ENCODE measurements at regions of chr7 and their contacts with region 1.

Region 1: DNA sequence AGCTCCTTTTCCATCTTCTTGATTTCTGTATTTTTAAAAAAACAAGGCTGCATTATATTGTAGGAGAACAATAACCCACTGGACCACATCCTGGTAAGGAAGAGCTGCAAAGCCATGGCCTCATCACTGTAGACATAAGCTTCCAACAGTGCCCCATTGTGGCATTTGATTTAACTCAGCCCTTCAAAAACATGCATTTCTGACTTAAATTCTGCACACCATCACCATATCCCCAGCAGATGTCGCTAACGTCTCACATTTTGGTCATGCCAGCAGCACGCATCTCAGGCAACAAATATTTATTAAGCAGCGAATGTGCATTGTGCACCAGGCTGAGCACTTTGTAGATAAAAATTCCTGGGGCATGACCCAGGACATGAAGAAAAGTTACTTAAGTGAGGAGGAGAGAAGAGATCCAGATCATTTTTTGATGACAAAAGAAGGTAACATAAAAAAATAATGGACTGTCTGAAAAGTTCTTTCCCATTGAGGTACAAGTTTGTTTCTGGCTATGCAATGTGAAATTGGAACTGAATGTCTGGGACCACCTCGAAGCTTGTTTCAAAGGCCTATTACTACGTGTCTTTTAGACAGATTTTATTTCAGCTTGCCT is 164.6 kb upstream of the CDCA7L start:
- DNase-seq: peak; percentile 55
- ATAC-seq: peak; percentile 95
- H3K4me3 ChIP-seq: no peak overlapping the region
- H3K27ac ChIP-seq: no peak overlapping the region
- H3K4me1 ChIP-seq: no peaks in the 10 kb centered on the region
- H3K27me3 ChIP-seq: peaks cover 0 to 2% of the 10 kb centered on the region in 2 experiments; a peak in 1 of 4 replicates
- CTCF ChIP-seq: peak; percentile 76 to 97 (median 90); a peak in 5 of 6 replicates
- EP300 ChIP-seq: no peak
- POLR2A ChIP-seq: no peak
- RAD21 ChIP-seq: peak; percentile 100

Region 2: DNA sequence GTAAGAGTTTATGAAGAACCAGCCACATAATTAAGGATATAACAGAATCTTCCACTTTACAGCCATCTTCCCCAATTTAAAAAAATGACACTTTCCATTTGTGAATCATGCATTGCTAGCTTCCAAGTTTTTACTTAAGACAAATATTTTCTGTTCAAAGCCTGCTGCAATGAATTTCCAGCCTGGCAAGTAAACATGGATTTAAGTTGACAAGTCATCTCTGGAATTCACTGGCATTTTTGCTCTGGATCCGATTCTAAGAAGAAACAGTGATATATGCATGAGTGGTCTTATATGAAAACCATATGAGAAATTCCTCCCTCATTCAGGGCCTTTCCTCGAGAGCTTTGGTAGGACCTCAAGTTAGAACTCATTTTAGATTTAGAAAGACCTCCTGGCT is 48.6 kb before region 1 on chr7:
- CTCF ChIA-PET with region 1: no interaction called
- POLR2A ChIA-PET with region 1: no interaction called
- RAD21 ChIA-PET with region 1: no interaction called
- SMC1A ChIA-PET with region 1: no interaction called
- in situ Hi-C with region 1: no loop called
- intact Hi-C with region 1: no loop called
- DNase-seq: no peak
- ATAC-seq: no peak
- H3K4me3 ChIP-seq: no peak overlapping the region
- H3K27ac ChIP-seq: no peak overlapping the region
- H3K4me1 ChIP-seq: no peaks in the 10 kb centered on the region
- H3K27me3 ChIP-seq: no peaks in the 10 kb centered on the region; a peak in 1 of 4 replicates
- CTCF ChIP-seq: no peak
- EP300 ChIP-seq: no peak
- POLR2A ChIP-seq: no peak
- RAD21 ChIP-seq: no peak

Region 3: DNA sequence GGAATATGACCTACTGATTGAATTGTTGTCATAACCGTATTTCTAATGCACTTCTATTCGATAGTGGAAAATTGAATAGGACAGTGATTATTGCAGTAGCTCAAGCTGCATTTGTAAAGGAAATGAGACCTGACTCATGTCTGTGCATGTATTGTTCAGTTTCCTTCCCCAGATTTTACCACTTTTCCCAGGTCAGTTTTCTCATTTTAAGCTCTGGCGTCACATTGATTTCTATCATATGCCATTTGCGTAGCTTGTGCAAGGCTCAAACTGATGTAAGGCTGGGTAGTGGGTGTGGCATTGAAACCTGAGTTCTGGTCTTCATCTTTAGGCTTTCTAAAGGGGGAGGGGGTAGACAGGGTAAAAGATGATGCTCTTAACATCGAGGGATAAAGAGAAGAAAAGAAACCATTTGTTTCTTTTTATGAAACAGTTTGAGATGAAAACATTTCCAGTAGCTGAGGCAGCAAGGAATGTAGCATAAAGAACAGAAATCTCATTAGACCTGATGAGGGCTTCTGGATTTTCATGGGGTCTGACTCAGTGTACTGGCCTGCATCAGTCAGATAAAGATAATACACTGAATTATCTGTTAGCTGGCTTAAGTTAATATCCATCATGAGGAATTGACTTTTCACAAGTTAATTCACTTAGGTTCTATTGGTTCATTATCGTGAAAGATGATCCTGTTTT is 17.6 kb after region 1 on chr7:
- CTCF ChIA-PET with region 1: interaction called, 17 read pairs
- POLR2A ChIA-PET with region 1: no interaction called
- RAD21 ChIA-PET with region 1: interaction called, 3 read pairs
- SMC1A ChIA-PET with region 1: interaction called, 3 read pairs
- in situ Hi-C with region 1: no loop called
- intact Hi-C with region 1: no loop called
- DNase-seq: no peak
- ATAC-seq: no peak
- H3K4me3 ChIP-seq: no peak overlapping the region
- H3K27ac ChIP-seq: no peak overlapping the region
- H3K4me1 ChIP-seq: no peaks in the 10 kb centered on the region
- H3K27me3 ChIP-seq: no peaks in the 10 kb centered on the region
- CTCF ChIP-seq: no peak
- EP300 ChIP-seq: no peak
- POLR2A ChIP-seq: no peak
- RAD21 ChIP-seq: no peak

Region 4: DNA sequence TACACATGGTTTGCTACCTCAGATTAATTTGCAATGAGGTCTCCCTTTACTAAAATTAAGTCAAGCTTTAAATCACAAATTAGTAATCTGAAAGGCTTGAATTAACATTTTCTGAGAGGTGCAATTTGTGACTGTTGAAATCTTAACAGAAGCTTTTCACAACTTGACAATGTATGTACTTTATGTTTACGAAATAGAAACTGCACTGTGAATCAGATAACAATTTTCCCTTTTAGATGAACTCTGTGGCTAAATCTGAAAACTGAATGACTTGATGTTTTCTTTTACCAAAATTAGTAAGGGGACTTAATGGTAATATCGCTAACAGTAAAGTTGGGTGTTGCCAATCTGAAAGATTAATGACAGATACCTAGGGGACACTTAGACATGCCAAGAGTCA is 49.0 kb after region 1 on chr7:
- CTCF ChIA-PET with region 1: interaction called, 11 read pairs
- POLR2A ChIA-PET with region 1: no interaction called
- RAD21 ChIA-PET with region 1: no interaction called
- SMC1A ChIA-PET with region 1: no interaction called
- in situ Hi-C with region 1: no loop called
- intact Hi-C with region 1: no loop called
- DNase-seq: no peak
- ATAC-seq: no peak
- H3K4me3 ChIP-seq: no peak overlapping the region
- H3K27ac ChIP-seq: no peak overlapping the region
- H3K4me1 ChIP-seq: no peaks in the 10 kb centered on the region
- H3K27me3 ChIP-seq: no peaks in the 10 kb centered on the region
- CTCF ChIP-seq: no peak
- EP300 ChIP-seq: no peak
- POLR2A ChIP-seq: no peak
- RAD21 ChIP-seq: no peak

Region 5: GRCh38 chr7:22452142-22452959 is 342.0 kb after region 1 on chr7:
- CTCF ChIA-PET with region 1: interaction called, 45 read pairs
- POLR2A ChIA-PET with region 1: no interaction called
- RAD21 ChIA-PET with region 1: interaction called, 17 read pairs
- SMC1A ChIA-PET with region 1: interaction called, 22 read pairs
- in situ Hi-C with region 1: no loop called
- intact Hi-C with region 1: loop called (anchors 1 kb)
- DNase-seq: no peak
- ATAC-seq: peak; percentile 65
- H3K4me3 ChIP-seq: no peak overlapping the region; the same call in 1 of the 2 replicates
- H3K27ac ChIP-seq: no peak overlapping the region
- H3K4me1 ChIP-seq: peaks cover 7% of the 10 kb centered on the region
- H3K27me3 ChIP-seq: no peaks in the 10 kb centered on the region; a peak in 1 of 4 replicates
- CTCF ChIP-seq: peak; percentile 53 to 85 (median 81)
- EP300 ChIP-seq: no peak
- POLR2A ChIP-seq: no peak
- RAD21 ChIP-seq: peak; percentile 70

Region 6: DNA sequence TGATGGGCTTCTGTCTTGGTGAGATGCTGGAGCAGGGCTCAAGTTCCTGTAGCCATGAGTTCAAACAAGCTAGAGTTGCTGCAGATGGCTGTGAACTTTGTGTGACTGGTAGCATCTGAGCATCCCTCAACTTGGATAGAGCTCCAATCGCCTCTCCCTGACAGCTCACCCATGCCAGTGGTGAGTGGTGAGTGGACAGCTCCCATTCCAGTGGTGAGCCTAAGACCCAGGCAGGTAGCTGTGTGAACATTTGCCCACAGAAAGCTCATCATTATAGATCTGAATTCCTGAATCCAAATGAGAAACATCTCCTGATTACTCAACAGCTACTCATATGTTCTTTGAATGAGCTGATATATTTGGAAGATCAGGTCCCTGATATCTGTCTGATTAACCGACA is 364.3 kb after region 1 on chr7:
- CTCF ChIA-PET with region 1: interaction called, 74 read pairs
- POLR2A ChIA-PET with region 1: no interaction called
- RAD21 ChIA-PET with region 1: interaction called, 3 read pairs
- SMC1A ChIA-PET with region 1: interaction called, 9 read pairs
- in situ Hi-C with region 1: no loop called
- intact Hi-C with region 1: no loop called
- DNase-seq: no peak
- ATAC-seq: no peak
- H3K4me3 ChIP-seq: no peak overlapping the region
- H3K27ac ChIP-seq: no peak overlapping the region
- H3K4me1 ChIP-seq: no peaks in the 10 kb centered on the region
- H3K27me3 ChIP-seq: peaks cover 0 to 2% of the 10 kb centered on the region in 2 experiments; a peak in 1 of 4 replicates
- CTCF ChIP-seq: no peak
- EP300 ChIP-seq: no peak
- POLR2A ChIP-seq: no peak
- RAD21 ChIP-seq: no peak

Region 7: GRCh38 chr7:22499044-22499443 is 388.7 kb after region 1 on chr7:
- CTCF ChIA-PET with region 1: interaction called, 15 read pairs
- POLR2A ChIA-PET with region 1: no interaction called
- RAD21 ChIA-PET with region 1: no interaction called
- SMC1A ChIA-PET with region 1: no interaction called
- in situ Hi-C with region 1: no loop called
- intact Hi-C with region 1: no loop called
- DNase-seq: no peak
- ATAC-seq: no peak
- H3K4me3 ChIP-seq: no peak overlapping the region
- H3K27ac ChIP-seq: no peak overlapping the region
- H3K4me1 ChIP-seq: no peaks in the 10 kb centered on the region
- H3K27me3 ChIP-seq: no peaks in the 10 kb centered on the region
- CTCF ChIP-seq: no peak
- EP300 ChIP-seq: no peak
- POLR2A ChIP-seq: no peak
- RAD21 ChIP-seq: no peak

Measured in GM12878 (cell line).